K562 (cell line): ENCODE measurements at regions of chr9 and their contacts with region 1.

Region 1: GRCh38 chr9:92140074-92140753 is 25.0 kb upstream of the SPTLC1 start:
- DNase-seq: peak; percentile 74 to 86 (median 77)
- ATAC-seq: peak; percentile 78
- H3K4me3 ChIP-seq: no peak overlapping the region
- H3K27ac ChIP-seq: no peak overlapping the region
- H3K4me1 ChIP-seq: peaks cover 6 to 36% of the 10 kb centered on the region in 2 experiments; a peak in 4 of 5 replicates
- H3K27me3 ChIP-seq: peaks cover 0 to 10% of the 10 kb centered on the region in 2 experiments; a peak in 1 of 5 replicates
- CTCF ChIP-seq: peak; percentile 87 to 92 (median 91)
- EP300 ChIP-seq: no peak
- POLR2A ChIP-seq: no peak
- RAD21 ChIP-seq: peak; percentile 75 to 91

Region 2: GRCh38 chr9:92206488-92206887 is 66.3 kb after region 1 on chr9:
- CTCF ChIA-PET with region 1: interaction called, 3 read pairs
- POLR2A ChIA-PET with region 1: interaction called, 3 read pairs
- in situ Hi-C with region 1: loop called (anchors 5 kb)
- intact Hi-C with region 1: no loop called
- DNase-seq: no peak
- ATAC-seq: peak; percentile 41
- H3K4me3 ChIP-seq: no peak overlapping the region
- H3K27ac ChIP-seq: no peak overlapping the region
- H3K4me1 ChIP-seq: 0 out of 5 replicates have a peak, but pooled peaks cover 0 to 2% of the 10 kb centered on the region in 2 experiments
- H3K27me3 ChIP-seq: no peaks in the 10 kb centered on the region
- CTCF ChIP-seq: no peak
- EP300 ChIP-seq: no peak
- POLR2A ChIP-seq: no peak
- RAD21 ChIP-seq: 0 out of 4 replicates have a peak, but pooled peaks of 1 of the 2 experiments have one; percentile 7

Region 3: DNA sequence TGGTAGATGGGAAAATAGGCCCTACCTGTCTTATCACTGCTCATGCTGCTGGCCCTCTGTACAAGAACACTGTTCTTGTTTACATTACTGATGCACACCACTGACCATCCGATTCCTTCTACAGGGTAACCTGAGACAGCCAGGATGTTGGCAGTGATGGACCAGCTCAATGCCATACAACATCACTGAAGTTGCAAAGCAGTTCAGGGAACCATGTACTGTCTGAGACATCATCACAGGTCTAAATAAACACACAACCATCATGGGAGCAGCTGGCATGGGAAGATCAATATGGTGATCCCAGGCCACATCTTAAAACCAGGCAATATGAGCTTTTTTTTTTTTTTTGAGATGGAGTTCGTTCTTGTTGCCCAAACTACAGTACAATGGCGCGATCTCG is 94.3 kb after region 1 on chr9:
- CTCF ChIA-PET with region 1: no interaction called
- POLR2A ChIA-PET with region 1: interaction called, 9 read pairs
- in situ Hi-C with region 1: no loop called
- intact Hi-C with region 1: loop called (anchors 5 kb)
- DNase-seq: no peak
- ATAC-seq: peak; percentile 17
- H3K4me3 ChIP-seq: no peak overlapping the region
- H3K27ac ChIP-seq: no peak overlapping the region
- H3K4me1 ChIP-seq: no peaks in the 10 kb centered on the region
- H3K27me3 ChIP-seq: no peaks in the 10 kb centered on the region
- CTCF ChIP-seq: no peak
- EP300 ChIP-seq: no peak
- POLR2A ChIP-seq: peak; percentile 46; the same call in 1 of the 2 replicates
- RAD21 ChIP-seq: no peak

Region 4: GRCh38 chr9:92634712-92635605 is 494.7 kb after region 1 on chr9:
- CTCF ChIA-PET with region 1: interaction called, 16 read pairs
- POLR2A ChIA-PET with region 1: no interaction called
- in situ Hi-C with region 1: loop called (anchors 5 kb)
- intact Hi-C with region 1: loop called (anchors 2 kb)
- DNase-seq: peak; percentile 82 to 85 (median 83)
- ATAC-seq: peak; percentile 99
- H3K4me3 ChIP-seq: no peak overlapping the region
- H3K27ac ChIP-seq: no peak overlapping the region
- H3K4me1 ChIP-seq: peaks cover 0 to 5% of the 10 kb centered on the region in 2 experiments; a peak in 1 of 5 replicates
- H3K27me3 ChIP-seq: no peaks in the 10 kb centered on the region
- CTCF ChIP-seq: peak; percentile 98 to 100 (median 99)
- EP300 ChIP-seq: no peak
- POLR2A ChIP-seq: no peak
- RAD21 ChIP-seq: peak; percentile 87 to 94